A549 (cell line): ENCODE measurements at regions of chr14 and their contacts with region 1.

Region 1: DNA sequence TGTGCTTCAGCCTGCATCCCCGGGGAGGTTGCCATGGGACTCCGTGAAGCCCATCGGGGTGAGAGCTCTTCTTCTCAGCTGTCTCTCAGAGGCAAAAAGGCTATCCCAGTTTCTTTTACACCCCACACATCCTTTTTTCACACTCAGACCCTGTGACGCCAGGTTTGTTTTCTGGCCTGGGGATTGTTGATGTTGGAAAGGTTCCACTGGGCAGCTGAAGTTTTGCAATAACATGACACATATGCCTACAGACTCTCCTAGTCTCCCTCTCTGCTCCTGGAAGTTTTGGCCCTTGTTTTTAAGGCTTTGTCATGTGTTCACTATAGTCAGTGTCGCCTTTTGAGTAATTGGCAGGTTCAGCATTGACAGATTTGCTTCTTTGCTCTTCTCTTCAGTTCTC is 118.6 kb downstream of the SMOC1 start:
- DNase-seq: peak; percentile 40 to 87
- ATAC-seq: peak; percentile 70 to 71
- H3K4me3 ChIP-seq: no peak overlapping the region
- H3K27ac ChIP-seq: peak overlapping the region; percentile 90 to 98
- H3K4me1 ChIP-seq: peaks cover 60% of the 10 kb centered on the region
- CTCF ChIP-seq: no peak
- EP300 ChIP-seq: peak; percentile 94 to 97; a peak in 4 of 5 replicates
- POLR2A ChIP-seq: no peak
- RAD21 ChIP-seq: peak in 1 of 2 experiments; percentile 61; a peak in 2 of 5 replicates

Region 2: GRCh38 chr14:70013269-70013873 is 15.5 kb after region 1 on chr14:
- CTCF ChIA-PET with region 1: interaction called, 11 read pairs
- POLR2A ChIA-PET with region 1: interaction called, 5 read pairs
- DNase-seq: peak; percentile 28 to 41
- ATAC-seq: peak; percentile 45 to 82; a peak in 4 of 6 replicates
- H3K4me3 ChIP-seq: no peak overlapping the region
- H3K27ac ChIP-seq: 0 out of 6 replicates have a peak overlapping the region, but pooled peaks of 1 of the 2 experiments have one; percentile 17
- H3K4me1 ChIP-seq: peaks cover 10% of the 10 kb centered on the region; the same call in 2 of the 3 replicates
- CTCF ChIP-seq: peak; percentile 45
- EP300 ChIP-seq: no peak
- POLR2A ChIP-seq: no peak
- RAD21 ChIP-seq: peak; percentile 31 to 59; a peak in 3 of 5 replicates